ENCODE measurements at regions of chr14 and their contacts with region 1.

Region 1: GRCh38 chr14:23186913-23187654 is 3.6 kb upstream of the SLC7A8 start:
- DNase-seq: peak; percentile 46 to 65 (median 61)
- H3K4me3 ChIP-seq: no peak overlapping the region
- H3K4me3 Mint-ChIP-seq: no peak overlapping the region
- H3K27ac ChIP-seq: no peak overlapping the region
- H3K27ac Mint-ChIP-seq: no peak overlapping the region
- H3K4me1 ChIP-seq: peaks cover 15 to 17% of the 10 kb centered on the region in 2 donors
- H3K4me1 Mint-ChIP-seq: peaks cover 4% of the 10 kb centered on the region
- H3K27me3 ChIP-seq: peaks cover 5 to 7% of the 10 kb centered on the region in 2 donors
- H3K27me3 Mint-ChIP-seq: peaks cover 0 to 4% (median 0%) of the 10 kb centered on the region in 3 donors
- CTCF ChIP-seq: peak; percentile 87

Region 2: DNA sequence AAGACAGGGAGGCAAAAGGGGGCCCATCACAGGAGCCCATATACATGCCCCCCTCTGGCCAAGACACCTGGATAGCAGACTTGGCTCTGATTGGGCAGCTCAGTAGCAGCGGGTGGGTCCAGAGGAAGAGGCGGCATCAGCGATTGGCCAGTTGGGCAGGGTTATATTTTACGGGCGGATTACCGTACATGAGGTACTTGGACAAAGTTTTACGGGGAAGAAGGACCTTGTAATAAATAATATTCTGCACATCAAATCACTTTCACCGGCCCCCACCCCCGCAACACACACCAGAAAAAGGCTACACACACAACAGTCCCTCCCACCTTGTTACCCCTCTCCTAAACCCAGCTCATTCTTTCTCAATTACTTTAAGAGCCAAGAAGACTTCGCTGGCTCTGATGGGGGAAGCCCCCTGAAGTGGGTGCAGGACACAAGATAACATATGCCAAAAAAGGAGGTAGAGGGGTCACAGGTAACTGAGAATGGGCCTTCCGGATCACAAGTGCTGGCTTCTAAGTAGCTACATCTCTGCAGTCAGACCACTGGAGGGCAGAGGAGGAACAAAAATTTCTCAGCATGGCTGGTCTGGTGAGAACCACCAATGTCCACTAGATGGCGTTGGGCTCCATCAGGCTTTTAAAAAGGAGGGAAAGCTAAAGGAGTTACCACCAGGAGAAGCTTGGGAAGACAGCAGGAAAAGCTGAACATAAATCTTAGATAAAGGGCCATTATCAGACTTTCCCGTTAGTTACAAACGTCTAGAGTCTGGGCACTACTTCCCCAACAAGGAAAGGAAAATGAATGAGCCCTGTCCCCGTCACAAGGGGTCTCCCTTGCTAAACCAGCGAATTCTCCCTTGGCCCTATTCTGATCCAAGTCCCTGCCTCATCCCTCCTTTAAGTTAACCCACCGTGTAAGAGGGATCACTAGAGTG is 118.3 kb before region 1 on chr14:
- intact Hi-C with region 1: loop called in 1 of 2 experiments (anchors 5 kb)
- DNase-seq: peak; percentile 76 to 87 (median 80)
- H3K4me3 ChIP-seq: no peak overlapping the region
- H3K4me3 Mint-ChIP-seq: no peak overlapping the region
- H3K27ac ChIP-seq: peak overlapping the region in 1 of 2 donors; percentile 2
- H3K27ac Mint-ChIP-seq: peak overlapping the region in 6 of 7 donors; percentile 61 to 90 (median 69)
- H3K4me1 ChIP-seq: peaks cover 31 to 39% of the 10 kb centered on the region in 2 donors
- H3K4me1 Mint-ChIP-seq: peaks cover 35% of the 10 kb centered on the region
- H3K27me3 ChIP-seq: no peaks in the 10 kb centered on the region
- H3K27me3 Mint-ChIP-seq: no peaks in the 10 kb centered on the region
- CTCF ChIP-seq: peak; percentile 100

Region 3: GRCh38 chr14:23076785-23077408 is 110.2 kb before region 1 on chr14:
- intact Hi-C with region 1: loop called in 1 of 2 experiments (anchors 5 kb)
- DNase-seq: peak in 2 of 3 donors; percentile 34 to 40
- H3K4me3 ChIP-seq: no peak overlapping the region
- H3K4me3 Mint-ChIP-seq: no peak overlapping the region
- H3K27ac ChIP-seq: peak overlapping the region in 1 of 2 donors; percentile 75
- H3K27ac Mint-ChIP-seq: peak overlapping the region in 5 of 7 donors; percentile 8 to 89 (median 50)
- H3K4me1 ChIP-seq: peaks cover 28 to 44% of the 10 kb centered on the region in 2 donors
- H3K4me1 Mint-ChIP-seq: peaks cover 33% of the 10 kb centered on the region
- H3K27me3 ChIP-seq: no peaks in the 10 kb centered on the region
- H3K27me3 Mint-ChIP-seq: no peaks in the 10 kb centered on the region
- CTCF ChIP-seq: peak; percentile 89

Region 4: GRCh38 chr14:23120541-23121251 is 66.4 kb before region 1 on chr14:
- intact Hi-C with region 1: loop called (anchors 1 to 2 kb)
- DNase-seq: peak; percentile 85 to 91 (median 89)
- H3K4me3 ChIP-seq: peak overlapping the region in 1 of 3 experiments; percentile 65
- H3K4me3 Mint-ChIP-seq: peak overlapping the region in 1 of 2 donors; percentile 74
- H3K27ac ChIP-seq: peak overlapping the region; percentile 73 to 88
- H3K27ac Mint-ChIP-seq: peak overlapping the region; percentile 88 to 94 (median 92)
- H3K4me1 ChIP-seq: peaks cover 36 to 50% of the 10 kb centered on the region in 2 donors
- H3K4me1 Mint-ChIP-seq: peaks cover 59% of the 10 kb centered on the region
- H3K27me3 ChIP-seq: no peaks in the 10 kb centered on the region
- H3K27me3 Mint-ChIP-seq: peaks cover 0 to 2% (median 0%) of the 10 kb centered on the region in 3 donors
- CTCF ChIP-seq: peak; percentile 99

Region 5: DNA sequence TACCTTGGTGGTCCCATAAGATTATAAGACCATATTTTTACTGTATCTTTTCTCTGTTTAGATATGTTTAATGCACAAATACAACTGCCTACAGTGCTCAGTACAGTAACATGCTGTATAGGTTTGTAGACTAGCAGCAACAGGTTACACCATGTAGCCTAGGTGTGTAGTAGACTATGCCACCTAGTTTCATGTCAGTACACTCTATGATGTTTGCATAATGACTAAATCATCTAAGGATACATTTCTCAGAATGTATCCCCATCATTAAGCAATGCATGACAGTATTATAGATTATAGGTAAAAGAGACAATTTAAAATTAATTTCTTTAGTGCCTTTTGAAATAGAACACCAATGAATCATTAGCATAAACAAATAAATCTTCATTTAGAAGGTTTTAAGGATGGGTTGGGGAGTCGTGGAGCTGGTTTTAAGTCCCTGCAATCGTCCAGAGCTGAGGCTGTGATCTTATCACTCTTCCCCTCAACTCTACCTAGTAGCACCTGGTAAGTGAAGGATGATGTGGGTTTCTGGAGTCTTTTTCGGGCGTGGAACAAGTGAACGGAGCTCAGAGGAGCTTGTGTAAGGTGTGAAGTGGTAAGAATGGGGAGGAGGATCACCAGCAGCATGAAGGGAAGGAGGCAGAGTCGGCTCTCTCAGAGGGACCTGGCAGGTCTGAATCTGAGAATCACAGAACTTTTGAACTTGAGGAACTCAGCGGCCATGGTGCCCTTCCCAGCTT is 37.1 kb before region 1 on chr14:
- intact Hi-C with region 1: no loop called
- DNase-seq: no peak
- H3K4me3 ChIP-seq: no peak overlapping the region
- H3K4me3 Mint-ChIP-seq: no peak overlapping the region
- H3K27ac ChIP-seq: no peak overlapping the region
- H3K27ac Mint-ChIP-seq: no peak overlapping the region
- H3K4me1 ChIP-seq: peaks cover 17 to 19% of the 10 kb centered on the region in 2 donors
- H3K4me1 Mint-ChIP-seq: peaks cover 23% of the 10 kb centered on the region
- H3K27me3 ChIP-seq: no peaks in the 10 kb centered on the region
- H3K27me3 Mint-ChIP-seq: peaks cover 0 to 3% (median 0%) of the 10 kb centered on the region in 3 donors
- CTCF ChIP-seq: no peak

Region 6: GRCh38 chr14:23162800-23163199 is 24.3 kb before region 1 on chr14:
- intact Hi-C with region 1: loop called in 1 of 2 experiments (anchors 2 kb)
- DNase-seq: no peak
- H3K4me3 ChIP-seq: no peak overlapping the region
- H3K4me3 Mint-ChIP-seq: peak overlapping the region; percentile 12 to 61
- H3K27ac ChIP-seq: peak overlapping the region; percentile 7 to 47
- H3K27ac Mint-ChIP-seq: peak overlapping the region; percentile 86 to 99 (median 99)
- H3K4me1 ChIP-seq: peaks cover 50 to 53% of the 10 kb centered on the region in 2 donors
- H3K4me1 Mint-ChIP-seq: peaks cover 52% of the 10 kb centered on the region
- H3K27me3 ChIP-seq: no peaks in the 10 kb centered on the region
- H3K27me3 Mint-ChIP-seq: peaks cover 0 to 3% (median 1%) of the 10 kb centered on the region in 3 donors
- CTCF ChIP-seq: no peak

Region 7: GRCh38 chr14:23399591-23399990 is 212.5 kb after region 1 on chr14:
- intact Hi-C with region 1: no loop called
- DNase-seq: no peak
- H3K4me3 ChIP-seq: no peak overlapping the region
- H3K4me3 Mint-ChIP-seq: peak overlapping the region in 1 of 2 donors; percentile 32
- H3K27ac ChIP-seq: no peak overlapping the region
- H3K27ac Mint-ChIP-seq: no peak overlapping the region
- H3K4me1 ChIP-seq: peaks cover 5 to 7% of the 10 kb centered on the region in 2 donors
- H3K4me1 Mint-ChIP-seq: peaks cover 19% of the 10 kb centered on the region
- H3K27me3 ChIP-seq: no peaks in the 10 kb centered on the region
- H3K27me3 Mint-ChIP-seq: peaks cover 0 to 7% (median 4%) of the 10 kb centered on the region in 3 donors
- CTCF ChIP-seq: no peak

Measured in CD14-positive monocyte (primary cell).